ENCODE measurements at regions of chr4 and their contacts with region 1.

Region 1: DNA sequence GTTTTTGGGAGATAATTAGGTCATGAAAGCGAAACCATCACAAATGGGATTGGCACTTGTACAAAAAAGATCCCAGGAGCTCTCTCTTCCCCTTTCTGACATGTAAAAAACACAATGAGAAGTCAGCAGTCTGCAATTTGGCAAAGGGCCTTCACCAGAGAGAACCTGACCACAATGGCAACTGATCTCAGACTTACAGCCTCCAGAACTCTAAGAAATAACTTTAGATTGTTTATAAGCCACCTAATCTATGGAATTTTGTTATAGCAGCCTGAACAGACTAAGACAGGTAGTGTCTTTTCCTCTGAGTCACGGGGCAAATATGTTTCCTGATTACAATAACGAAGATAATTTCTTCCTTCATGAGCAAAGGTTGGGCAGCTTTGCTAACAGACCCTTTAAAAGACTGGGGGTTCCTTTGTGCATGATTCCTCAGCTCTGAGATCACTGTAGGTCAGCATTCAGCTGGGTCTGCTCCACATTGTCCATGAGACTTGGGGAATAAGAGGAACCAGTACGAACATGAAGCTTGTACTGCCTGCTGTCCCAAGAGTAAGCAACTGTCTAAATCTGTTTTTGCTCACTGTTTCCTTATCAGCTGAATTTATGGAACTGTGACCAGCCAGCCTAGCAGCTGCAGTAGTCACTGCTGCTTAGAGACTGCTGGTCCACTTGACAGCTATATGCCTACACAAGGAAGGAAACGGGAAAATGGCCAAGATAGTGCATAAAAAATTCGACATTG is 191.6 kb downstream of the ANAPC10 start:
- DNase-seq: peak; percentile 39
- H3K4me3 ChIP-seq: no peak overlapping the region
- H3K27ac ChIP-seq: peak overlapping the region; percentile 54
- H3K4me1 ChIP-seq: peaks cover 18% of the 10 kb centered on the region
- H3K27me3 ChIP-seq: no peaks in the 10 kb centered on the region
- CTCF ChIP-seq: no peak
- POLR2A ChIP-seq: no peak

Region 2: GRCh38 chr4:145012841-145013240 is 106.5 kb after region 1 on chr4:
- CTCF ChIA-PET with region 1: no interaction called
- POLR2A ChIA-PET with region 1: no interaction called
- dilution Hi-C with region 1: no loop called
- intact Hi-C with region 1: loop called (anchors 5 kb)
- DNase-seq: peak; percentile 95
- H3K4me3 ChIP-seq: no peak overlapping the region
- H3K27ac ChIP-seq: peak overlapping the region; percentile 91
- H3K4me1 ChIP-seq: peaks cover 21% of the 10 kb centered on the region
- H3K27me3 ChIP-seq: no peaks in the 10 kb centered on the region
- CTCF ChIP-seq: no peak
- POLR2A ChIP-seq: no peak

Region 3: GRCh38 chr4:145260091-145260490 is 353.7 kb after region 1 on chr4:
- CTCF ChIA-PET with region 1: no interaction called
- POLR2A ChIA-PET with region 1: no interaction called
- dilution Hi-C with region 1: no loop called
- intact Hi-C with region 1: no loop called
- DNase-seq: no peak
- H3K4me3 ChIP-seq: no peak overlapping the region
- H3K27ac ChIP-seq: no peak overlapping the region
- H3K4me1 ChIP-seq: no peaks in the 10 kb centered on the region
- H3K27me3 ChIP-seq: peaks cover 0 to 3% of the 10 kb centered on the region in 2 experiments
- CTCF ChIP-seq: no peak
- POLR2A ChIP-seq: no peak

Measured in endothelial cell of umbilical vein (primary cell).